OCI-LY7 (cell line): ENCODE measurements at regions of chr14 and their contacts with region 1.

Region 1: DNA sequence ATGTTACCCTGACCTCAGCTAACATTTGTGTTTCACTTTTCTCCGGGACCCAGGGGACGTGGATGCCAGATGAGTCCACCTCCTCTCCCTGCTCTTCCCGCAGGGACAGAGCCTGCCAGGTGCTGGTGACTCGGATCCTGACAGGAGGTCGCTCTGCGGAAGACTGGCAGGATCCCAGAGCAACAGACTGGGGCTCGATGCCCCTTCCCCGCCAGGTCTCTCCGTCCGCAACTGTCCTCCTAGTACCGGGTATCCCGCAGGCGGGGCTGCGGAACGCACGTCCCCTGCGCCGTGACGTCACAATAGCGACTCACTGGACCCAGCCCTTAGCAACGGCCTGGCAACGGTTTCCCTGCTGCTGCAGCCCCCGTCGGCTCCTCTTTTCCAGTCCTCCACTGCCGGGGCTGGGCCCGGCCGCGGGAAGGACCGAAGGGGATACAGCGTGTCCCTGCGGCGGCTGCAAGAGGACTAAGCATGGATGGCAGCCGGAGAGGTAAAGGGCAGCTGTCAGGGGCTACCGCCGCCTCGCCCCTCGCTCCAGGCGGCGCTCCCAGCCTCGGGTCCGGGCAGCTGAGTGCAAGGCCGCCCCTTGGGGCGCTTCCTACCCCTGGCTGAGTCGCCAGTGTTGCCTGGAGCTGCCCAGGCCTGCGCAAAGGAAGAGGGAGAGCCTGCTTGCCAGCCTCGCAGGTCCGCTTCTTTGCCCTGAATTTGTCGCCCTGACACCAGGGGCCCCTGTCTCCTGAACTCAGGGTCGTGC is at the start of gene SPATA7:
- DNase-seq: peak; percentile 90
- H3K4me3 ChIP-seq: peak within 1 kb of the TSS; percentile 89
- H3K27ac ChIP-seq: no peak within 1 kb of the TSS
- H3K4me1 ChIP-seq: peaks cover 16% of the 10 kb centered on the region
- CTCF ChIP-seq: no peak
- total RNA-seq, gene SPATA7: 7.3 and 10.3 TPM in 2 replicates

Region 2: GRCh38 chr14:88005978-88006851 is 379.3 kb before region 1 on chr14:
- CTCF ChIA-PET with region 1: no interaction called
- POLR2A ChIA-PET with region 1: no interaction called
- intact Hi-C with region 1: loop called (anchors 10 kb)
- DNase-seq: peak; percentile 84
- H3K4me3 ChIP-seq: peak overlapping the region; percentile 71
- H3K27ac ChIP-seq: peak overlapping the region; percentile 78
- H3K4me1 ChIP-seq: peaks cover 42% of the 10 kb centered on the region
- CTCF ChIP-seq: no peak

Region 3: GRCh38 chr14:88323523-88324199 is 61.9 kb before region 1 on chr14:
- CTCF ChIA-PET with region 1: no interaction called
- POLR2A ChIA-PET with region 1: no interaction called
- intact Hi-C with region 1: loop called (anchors 5 kb)
- DNase-seq: peak; percentile 84
- H3K4me3 ChIP-seq: peak overlapping the region; percentile 74
- H3K27ac ChIP-seq: no peak overlapping the region
- H3K4me1 ChIP-seq: peaks cover 9% of the 10 kb centered on the region
- CTCF ChIP-seq: no peak

Region 4: GRCh38 chr14:88417594-88417993 is 32.1 kb after region 1 on chr14:
- CTCF ChIA-PET with region 1: no interaction called
- POLR2A ChIA-PET with region 1: no interaction called
- intact Hi-C with region 1: no loop called
- DNase-seq: no peak
- H3K4me3 ChIP-seq: no peak overlapping the region
- H3K27ac ChIP-seq: no peak overlapping the region
- H3K4me1 ChIP-seq: no peaks in the 10 kb centered on the region
- CTCF ChIP-seq: no peak

Region 5: GRCh38 chr14:88562831-88563686 is 177.5 kb after region 1 on chr14 and contains the start of gene ZC3H14:
- CTCF ChIA-PET with region 1: no interaction called
- POLR2A ChIA-PET with region 1: no interaction called
- intact Hi-C with region 1: loop called (anchors 10 kb)
- DNase-seq: peak; percentile 90
- H3K4me3 ChIP-seq: peak within 1 kb of the TSS; percentile 94
- H3K27ac ChIP-seq: peak within 1 kb of the TSS; percentile 43
- H3K4me1 ChIP-seq: peaks cover 16% of the 10 kb centered on the region
- CTCF ChIP-seq: peak; percentile 39; the same call in 1 of the 2 replicates
- total RNA-seq, gene ZC3H14: 51.9 and 53.5 TPM in 2 replicates